Sigmoid colon (tissue), 7 donors: ENCODE measurements at regions of chr10 and their contacts with region 1.

Region 1: DNA sequence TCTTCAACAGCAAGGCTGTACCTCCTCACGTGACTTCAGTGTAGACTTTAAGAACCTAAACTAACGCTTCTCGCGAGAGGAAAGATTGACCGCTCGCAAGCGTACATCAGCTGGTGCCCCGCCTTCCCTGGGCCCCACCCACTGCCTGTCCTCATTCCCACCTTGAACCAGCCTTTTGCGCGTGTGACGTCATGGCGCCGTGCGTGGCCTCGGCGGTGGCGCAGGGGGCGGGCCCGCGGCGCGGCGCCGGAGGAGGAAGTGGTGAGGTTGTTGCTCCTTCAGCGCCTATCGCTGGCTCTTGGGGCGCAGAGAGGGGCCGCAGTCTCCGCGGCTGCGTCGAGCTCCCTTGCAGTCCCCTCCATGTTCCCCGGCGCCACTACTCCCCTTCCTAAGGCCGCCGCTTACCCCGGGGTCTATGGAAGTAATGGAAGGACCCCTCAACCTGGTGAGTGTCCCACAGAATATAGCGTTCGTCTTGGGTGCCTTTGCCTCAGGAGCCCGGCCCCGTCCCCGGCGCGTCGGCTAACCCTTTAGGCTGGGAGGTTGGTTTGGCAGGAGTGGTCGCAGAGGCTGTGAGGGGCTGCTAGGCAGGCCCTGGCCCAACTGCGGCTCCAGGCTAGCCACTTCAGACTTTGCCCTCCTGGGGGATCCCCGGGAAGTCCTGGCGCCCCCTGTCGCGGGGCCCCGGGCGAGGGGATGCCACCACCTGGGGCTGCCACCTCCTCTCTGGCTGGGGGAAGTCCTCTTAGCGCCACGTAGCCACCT is at the start of gene NRBF2:
- DNase-seq: peak; percentile 99
- H3K4me3 ChIP-seq: peak within 1 kb of the TSS; percentile 82 to 93 (median 86)
- H3K27ac ChIP-seq: peak within 1 kb of the TSS; percentile 90 to 92 (median 91)
- H3K4me1 ChIP-seq: peaks cover 0 to 33% (median 27%) of the 10 kb centered on the region in 4 donors
- H3K27me3 ChIP-seq: no peaks in the 10 kb centered on the region
- CTCF ChIP-seq: peak in 1 of 4 experiments; percentile 19
- EP300 ChIP-seq: no peak
- POLR2A ChIP-seq: peak; percentile 92 to 93
- total RNA-seq, gene NRBF2: 12.7 to 15.0 (median 13.8) TPM

Region 2: GRCh38 chr10:62842983-62843382 is 290.3 kb before region 1 on chr10:
- intact Hi-C with region 1: no loop called
- DNase-seq: no peak
- H3K4me3 ChIP-seq: no peak overlapping the region
- H3K27ac ChIP-seq: no peak overlapping the region
- H3K4me1 ChIP-seq: no peaks in the 10 kb centered on the region
- H3K27me3 ChIP-seq: no peaks in the 10 kb centered on the region
- CTCF ChIP-seq: no peak
- EP300 ChIP-seq: no peak
- POLR2A ChIP-seq: no peak

Region 3: GRCh38 chr10:63115732-63116383 is 17.4 kb before region 1 on chr10:
- intact Hi-C with region 1: loop called (anchors 2 kb)
- DNase-seq: peak; percentile 94
- H3K4me3 ChIP-seq: no peak overlapping the region
- H3K27ac ChIP-seq: peak overlapping the region; percentile 70 to 80 (median 76)
- H3K4me1 ChIP-seq: peaks cover 0 to 33% (median 30%) of the 10 kb centered on the region in 4 donors
- H3K27me3 ChIP-seq: no peaks in the 10 kb centered on the region
- CTCF ChIP-seq: no peak
- EP300 ChIP-seq: peak in 2 of 4 donors; percentile 45 to 89
- POLR2A ChIP-seq: no peak